ENCODE measurements at regions of chr5 and their contacts with region 1.

Region 1: GRCh38 chr5:148090773-148091221 is 27.0 kb downstream of the SPINK5 start:
- DNase-seq: peak; percentile 67
- H3K4me3 Mint-ChIP-seq: peak overlapping the region; percentile 63
- H3K27ac Mint-ChIP-seq: peak overlapping the region; percentile 93
- H3K4me1 Mint-ChIP-seq: peaks cover 14% of the 10 kb centered on the region
- H3K27me3 Mint-ChIP-seq: no peaks in the 10 kb centered on the region
- CTCF ChIP-seq: no peak

Region 2: DNA sequence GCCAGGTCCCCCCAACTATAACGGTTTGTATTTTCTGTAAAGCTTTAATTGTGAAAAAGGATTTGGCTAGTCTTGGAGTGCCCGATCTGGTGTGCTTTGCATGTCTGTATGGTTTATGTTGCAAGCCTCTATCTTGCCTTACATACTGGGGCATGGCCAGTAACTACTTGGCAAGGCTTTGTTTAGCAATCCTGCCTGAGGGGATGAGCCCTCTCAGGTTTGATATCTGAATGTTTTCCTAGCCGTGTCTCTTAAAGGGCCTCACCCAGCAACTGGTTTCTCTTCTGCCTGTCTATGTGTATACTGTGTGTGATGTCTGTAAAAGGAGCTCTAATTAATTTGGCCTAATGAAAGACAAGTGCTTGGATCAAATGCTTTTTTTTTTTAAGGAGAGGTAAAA is 88.3 kb before region 1 on chr5:
- CTCF ChIA-PET with region 1: no interaction called
- POLR2A ChIA-PET with region 1: interaction called, 11 read pairs
- intact Hi-C with region 1: no loop called
- DNase-seq: peak; percentile 97
- H3K4me3 Mint-ChIP-seq: no peak overlapping the region
- H3K27ac Mint-ChIP-seq: peak overlapping the region; percentile 73
- H3K4me1 Mint-ChIP-seq: peaks cover 19% of the 10 kb centered on the region
- H3K27me3 Mint-ChIP-seq: no peaks in the 10 kb centered on the region
- CTCF ChIP-seq: no peak

Region 3: DNA sequence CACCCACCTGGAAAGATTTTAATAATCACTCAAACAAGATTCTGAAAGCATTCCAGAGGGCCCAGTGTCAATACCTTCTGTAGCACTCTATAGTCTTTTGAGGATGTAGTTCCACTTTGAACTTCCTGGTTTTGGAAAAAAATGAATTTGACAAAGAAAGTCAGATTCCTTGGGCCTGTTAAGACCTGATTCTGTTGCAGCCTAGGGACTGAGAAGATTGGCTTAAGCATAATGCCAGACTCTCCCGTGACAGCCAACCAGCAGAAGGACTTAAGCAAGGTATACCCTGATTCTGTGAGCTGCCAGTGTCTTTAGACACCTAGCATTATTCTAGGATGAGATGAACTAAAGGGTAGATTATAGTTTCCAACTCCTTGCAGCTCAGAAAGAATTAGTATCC is 20.2 kb before region 1 on chr5:
- CTCF ChIA-PET with region 1: interaction called, 3 read pairs
- POLR2A ChIA-PET with region 1: interaction called, 23 read pairs
- intact Hi-C with region 1: no loop called
- DNase-seq: no peak
- H3K4me3 Mint-ChIP-seq: no peak overlapping the region
- H3K27ac Mint-ChIP-seq: no peak overlapping the region
- H3K4me1 Mint-ChIP-seq: peaks cover 12% of the 10 kb centered on the region
- H3K27me3 Mint-ChIP-seq: no peaks in the 10 kb centered on the region
- CTCF ChIP-seq: no peak

Region 4: DNA sequence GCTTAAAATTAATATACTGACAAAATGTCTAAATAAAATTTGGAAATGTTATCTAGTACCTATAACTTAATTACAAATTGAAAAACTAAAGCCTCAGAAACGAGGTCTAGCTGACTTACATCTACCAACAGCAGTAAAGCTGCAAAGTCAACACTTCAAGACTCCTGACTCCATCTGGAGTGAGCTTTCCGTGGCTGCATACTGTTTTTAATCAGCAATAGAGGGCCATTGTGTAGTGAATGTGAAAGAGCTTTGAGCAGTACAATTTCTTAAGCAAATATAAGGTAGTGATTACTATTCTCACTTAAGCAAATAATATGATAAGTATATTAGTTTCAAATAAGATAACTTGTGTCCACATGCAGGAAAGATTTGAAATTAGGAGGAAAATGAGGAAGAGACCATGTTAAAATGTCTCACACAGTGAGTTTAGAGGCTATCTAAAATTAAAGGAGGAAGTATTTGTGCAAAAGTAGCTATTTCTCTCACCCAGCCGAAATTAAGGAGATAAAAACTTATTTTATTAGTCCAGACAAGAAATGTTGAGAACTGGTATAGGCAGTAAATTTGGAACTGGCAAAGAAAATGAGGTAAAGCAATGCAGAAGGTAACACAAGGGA is 118.5 kb after region 1 on chr5:
- CTCF ChIA-PET with region 1: no interaction called
- POLR2A ChIA-PET with region 1: no interaction called
- intact Hi-C with region 1: no loop called
- DNase-seq: no peak
- H3K4me3 Mint-ChIP-seq: no peak overlapping the region
- H3K27ac Mint-ChIP-seq: no peak overlapping the region
- H3K4me1 Mint-ChIP-seq: peaks cover 10% of the 10 kb centered on the region
- H3K27me3 Mint-ChIP-seq: no peaks in the 10 kb centered on the region
- CTCF ChIP-seq: no peak

Region 5: GRCh38 chr5:148507648-148508047 is 416.9 kb after region 1 on chr5:
- CTCF ChIA-PET with region 1: no interaction called
- POLR2A ChIA-PET with region 1: no interaction called
- intact Hi-C with region 1: no loop called
- DNase-seq: no peak
- H3K4me3 Mint-ChIP-seq: no peak overlapping the region
- H3K27ac Mint-ChIP-seq: no peak overlapping the region
- H3K4me1 Mint-ChIP-seq: no peaks in the 10 kb centered on the region
- H3K27me3 Mint-ChIP-seq: peaks cover 19% of the 10 kb centered on the region
- CTCF ChIP-seq: no peak

Measured in MCF 10A (cell line).